Activated CD4-positive, alpha-beta memory T cell treated with anti-CD3 and anti-CD28 coated beads, Interleukin-2, amount 10 ng/mL, durations not matched to agents 7 days and 5 days (primary cell): ENCODE measurements at regions of chr17 and their contacts with region 1.

Region 1: DNA sequence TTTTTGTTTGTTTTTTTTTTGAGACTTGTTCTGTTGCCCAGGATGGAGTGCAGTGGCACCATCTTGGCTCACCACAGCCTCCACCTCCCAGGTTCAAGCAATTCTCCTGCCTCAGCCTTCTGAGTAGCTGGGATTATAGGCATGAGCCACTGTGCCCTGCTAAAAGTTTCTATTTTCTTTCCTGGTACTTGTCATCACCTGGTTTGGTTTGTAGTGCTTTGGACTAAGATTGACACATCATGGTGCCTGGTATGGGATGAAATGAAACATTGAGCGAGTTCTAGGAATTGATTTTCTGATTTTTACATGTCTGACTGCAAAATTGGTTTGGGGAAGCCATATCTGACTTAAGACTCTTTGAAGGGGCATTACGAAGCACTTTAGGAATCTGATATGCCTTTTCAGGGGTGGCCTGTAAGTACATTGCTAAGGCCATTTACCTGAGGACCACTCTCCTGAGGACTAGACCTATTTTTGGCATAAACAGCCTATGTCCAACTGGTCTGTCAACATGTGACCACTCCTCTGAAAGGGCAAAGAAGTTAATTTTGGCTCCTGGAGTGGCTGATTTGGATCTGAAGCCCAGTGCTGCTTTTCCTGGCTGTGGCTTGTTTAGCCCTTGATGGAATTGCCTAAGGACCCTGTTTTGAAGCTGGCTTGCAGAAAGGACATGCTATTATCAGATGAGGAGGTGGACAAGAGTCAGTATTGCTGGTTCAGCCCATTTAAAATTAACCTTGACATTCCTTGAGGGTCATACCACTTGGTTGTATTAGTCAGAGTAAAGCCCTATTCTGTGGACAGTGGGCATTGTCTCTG is 18.4 kb upstream of the TBKBP1 start:
- DNase-seq: no peak
- H3K4me3 Mint-ChIP-seq: no peak overlapping the region
- H3K27ac Mint-ChIP-seq: peak overlapping the region; percentile 55
- H3K4me1 Mint-ChIP-seq: peaks cover 44% of the 10 kb centered on the region
- H3K27me3 Mint-ChIP-seq: no peaks in the 10 kb centered on the region

Region 2: DNA sequence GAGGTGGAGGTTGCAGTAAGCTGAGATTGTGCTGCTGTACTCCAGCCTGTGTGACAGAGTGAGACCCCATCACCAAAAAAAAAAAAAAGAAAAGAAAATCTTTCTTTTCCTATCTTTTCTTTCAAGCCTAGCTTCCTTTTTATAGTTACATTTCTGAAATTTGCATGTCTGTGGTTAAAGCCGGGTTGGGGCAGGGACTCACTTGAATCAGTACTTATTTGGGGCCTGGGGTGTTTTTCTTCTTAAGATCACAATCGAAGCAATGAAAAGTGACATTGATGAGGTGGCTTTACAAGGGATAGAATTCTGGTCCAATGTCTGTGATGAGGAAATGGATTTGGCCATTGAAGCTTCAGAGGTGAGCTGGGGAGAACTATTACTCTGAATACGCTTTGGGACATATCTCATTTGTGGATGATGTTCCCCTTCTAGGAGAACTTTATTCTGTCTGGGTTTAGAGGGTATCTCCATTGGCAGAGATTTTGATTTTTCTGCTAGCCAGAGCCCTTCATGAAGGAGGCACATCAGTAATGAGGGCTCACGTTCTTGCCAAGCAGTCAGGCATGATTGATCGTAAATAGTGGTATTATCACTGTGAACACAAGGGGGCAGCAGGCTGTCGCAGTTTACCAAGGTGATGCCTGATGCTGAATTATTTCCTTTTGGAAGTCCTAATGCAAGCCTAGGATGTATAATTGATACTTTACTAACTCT is 11.5 kb before region 1 on chr17:
- CTCF ChIA-PET with region 1: interaction called, 17 read pairs
- POLR2A ChIA-PET with region 1: interaction called, 14 read pairs
- DNase-seq: peak; percentile 67
- H3K4me3 Mint-ChIP-seq: no peak overlapping the region
- H3K27ac Mint-ChIP-seq: peak overlapping the region; percentile 71
- H3K4me1 Mint-ChIP-seq: peaks cover 50% of the 10 kb centered on the region
- H3K27me3 Mint-ChIP-seq: no peaks in the 10 kb centered on the region

Region 3: GRCh38 chr17:47687748-47688147 is 12.2 kb after region 1 on chr17:
- CTCF ChIA-PET with region 1: interaction called, 5 read pairs
- POLR2A ChIA-PET with region 1: interaction called, 10 read pairs
- DNase-seq: no peak
- H3K4me3 Mint-ChIP-seq: no peak overlapping the region
- H3K27ac Mint-ChIP-seq: no peak overlapping the region
- H3K4me1 Mint-ChIP-seq: peaks cover 25% of the 10 kb centered on the region
- H3K27me3 Mint-ChIP-seq: peaks cover 2% of the 10 kb centered on the region